Activated CD4-positive, alpha-beta memory T cell treated with anti-CD3 and anti-CD28 coated beads, Interleukin-2, amount 10 ng/mL, durations not matched to agents 7 days and 5 days (primary cell): ENCODE measurements at regions of chr9 and their contacts with region 1.

Region 1: DNA sequence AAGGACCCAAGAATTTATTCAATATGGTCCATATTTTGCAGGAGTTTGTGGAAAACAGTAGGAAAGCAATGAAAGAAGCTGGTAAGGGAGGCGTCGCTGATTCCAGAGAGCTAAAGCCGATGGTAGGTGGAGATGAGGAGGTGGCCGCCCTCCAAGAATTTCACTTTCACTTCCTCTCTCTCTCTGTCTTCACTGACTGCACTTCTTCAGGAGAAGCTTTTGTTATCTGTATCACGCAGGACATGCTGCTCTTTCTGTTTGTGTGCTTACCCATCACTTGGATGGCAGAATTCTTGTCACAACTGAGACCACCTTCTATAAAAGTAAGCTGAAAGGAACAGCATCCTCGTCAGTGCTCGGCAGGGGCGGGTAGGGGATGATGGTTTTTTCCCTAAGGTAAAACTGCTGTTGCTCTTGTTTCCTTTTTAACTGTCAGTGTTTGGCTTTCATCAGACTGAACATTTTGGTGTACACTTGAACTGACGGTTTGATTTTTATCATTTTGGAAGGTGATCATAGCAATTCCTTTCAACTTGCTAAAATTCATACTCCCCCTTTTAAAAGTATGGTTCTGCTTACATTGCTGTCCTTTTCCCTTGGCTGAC is 62.4 kb upstream of the FSD1L start:
- DNase-seq: peak; percentile 40
- H3K4me3 Mint-ChIP-seq: peak overlapping the region; percentile 76
- H3K27ac Mint-ChIP-seq: no peak overlapping the region
- H3K4me1 Mint-ChIP-seq: peaks cover 13% of the 10 kb centered on the region
- H3K27me3 Mint-ChIP-seq: peaks cover 9% of the 10 kb centered on the region

Region 2: GRCh38 chr9:105264380-105264779 is 121.1 kb before region 1 on chr9:
- CTCF ChIA-PET with region 1: no interaction called
- POLR2A ChIA-PET with region 1: no interaction called
- DNase-seq: no peak
- H3K4me3 Mint-ChIP-seq: peak overlapping the region; percentile 3
- H3K27ac Mint-ChIP-seq: no peak overlapping the region
- H3K4me1 Mint-ChIP-seq: peaks cover 27% of the 10 kb centered on the region
- H3K27me3 Mint-ChIP-seq: no peaks in the 10 kb centered on the region

Region 3: DNA sequence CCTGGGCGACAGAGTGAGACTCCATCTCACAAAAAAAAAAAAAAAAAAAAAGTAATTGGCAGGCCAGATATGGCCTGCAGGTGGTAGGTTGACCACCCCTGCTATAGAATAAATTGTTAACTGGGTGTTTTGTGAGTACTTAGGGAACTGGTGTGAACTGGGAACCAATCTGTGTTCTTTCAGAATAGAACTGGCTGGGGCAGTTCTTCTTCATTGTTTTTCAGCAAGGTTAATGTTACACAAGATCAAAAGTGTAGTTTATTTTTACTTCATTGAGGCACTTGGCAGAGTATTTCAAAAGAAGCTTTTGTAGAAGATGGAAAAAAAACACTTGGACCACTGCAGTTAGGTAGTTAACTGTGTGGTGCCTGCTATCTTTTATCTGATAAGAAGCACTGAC is 13.8 kb before region 1 on chr9:
- CTCF ChIA-PET with region 1: no interaction called
- POLR2A ChIA-PET with region 1: no interaction called
- DNase-seq: no peak
- H3K4me3 Mint-ChIP-seq: no peak overlapping the region
- H3K27ac Mint-ChIP-seq: no peak overlapping the region
- H3K4me1 Mint-ChIP-seq: peaks cover 12% of the 10 kb centered on the region
- H3K27me3 Mint-ChIP-seq: no peaks in the 10 kb centered on the region

Region 4: GRCh38 chr9:105405514-105406131 is 20.1 kb after region 1 on chr9:
- CTCF ChIA-PET with region 1: interaction called, 3 read pairs
- POLR2A ChIA-PET with region 1: interaction called, 15 read pairs
- DNase-seq: peak; percentile 76
- H3K4me3 Mint-ChIP-seq: peak overlapping the region; percentile 49
- H3K27ac Mint-ChIP-seq: peak overlapping the region; percentile 73
- H3K4me1 Mint-ChIP-seq: peaks cover 31% of the 10 kb centered on the region
- H3K27me3 Mint-ChIP-seq: peaks cover 76% of the 10 kb centered on the region

Region 5: GRCh38 chr9:105438141-105438806 is 52.8 kb after region 1 on chr9:
- CTCF ChIA-PET with region 1: no interaction called
- POLR2A ChIA-PET with region 1: no interaction called
- DNase-seq: no peak
- H3K4me3 Mint-ChIP-seq: no peak overlapping the region
- H3K27ac Mint-ChIP-seq: no peak overlapping the region
- H3K4me1 Mint-ChIP-seq: no peaks in the 10 kb centered on the region
- H3K27me3 Mint-ChIP-seq: peaks cover 3% of the 10 kb centered on the region

Region 6: GRCh38 chr9:105466898-105467455 is 81.5 kb after region 1 on chr9:
- CTCF ChIA-PET with region 1: no interaction called
- POLR2A ChIA-PET with region 1: no interaction called
- DNase-seq: no peak
- H3K4me3 Mint-ChIP-seq: no peak overlapping the region
- H3K27ac Mint-ChIP-seq: no peak overlapping the region
- H3K4me1 Mint-ChIP-seq: no peaks in the 10 kb centered on the region
- H3K27me3 Mint-ChIP-seq: no peaks in the 10 kb centered on the region